Calu3 (cell line): ENCODE measurements at regions of chr11 and their contacts with region 1.

Region 1: DNA sequence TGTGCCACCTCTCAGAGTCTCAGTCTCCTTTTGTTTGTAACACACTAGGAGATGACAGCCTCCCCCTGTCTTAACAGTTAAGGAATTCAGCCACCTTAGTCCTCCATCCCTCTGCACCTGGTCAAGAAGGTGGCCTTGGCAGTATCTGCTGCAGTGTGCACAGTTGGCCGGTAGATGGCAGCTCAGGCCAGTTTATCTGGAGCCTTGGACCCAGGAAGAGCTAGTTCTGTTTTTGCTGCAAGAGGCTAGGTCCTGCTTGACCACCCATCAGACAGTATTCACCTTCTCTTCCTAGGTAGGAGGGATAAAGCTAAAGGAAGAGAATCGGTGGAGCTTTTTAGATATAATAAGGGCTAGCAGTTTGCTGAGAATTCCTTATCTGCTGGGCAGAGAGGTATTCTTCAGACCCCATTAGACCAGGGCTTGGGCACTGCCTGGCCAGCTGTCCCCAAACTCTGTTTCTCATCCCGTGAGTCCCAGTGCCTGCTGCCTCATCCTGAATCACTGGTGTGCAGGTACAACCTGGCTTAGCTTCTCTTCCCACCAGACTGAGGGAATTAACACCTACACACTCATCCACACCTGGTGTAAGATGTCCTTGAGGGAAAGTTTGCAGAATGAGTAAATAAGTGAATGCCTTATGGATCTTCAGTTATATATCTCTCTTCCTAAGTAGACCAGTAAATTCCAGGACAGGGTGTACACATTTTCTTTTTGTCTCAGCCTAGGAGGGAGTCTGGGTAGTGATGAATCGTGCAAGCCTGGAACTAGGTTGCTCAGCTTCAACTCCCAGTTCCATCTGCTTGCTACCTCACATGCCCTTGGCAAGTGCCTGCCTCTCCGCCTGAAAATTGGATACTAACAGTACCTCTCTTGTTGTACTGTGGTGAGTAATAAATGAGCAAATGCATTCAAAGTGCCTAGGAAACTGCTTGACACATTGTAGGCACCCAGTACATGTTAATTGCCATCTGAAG is 70.8 kb upstream of the NARS2 start:
- DNase-seq: peak; percentile 78
- H3K4me3 Mint-ChIP-seq: no peak overlapping the region
- H3K27ac Mint-ChIP-seq: no peak overlapping the region
- H3K4me1 Mint-ChIP-seq: no peaks in the 10 kb centered on the region
- H3K27me3 Mint-ChIP-seq: peaks cover 82% of the 10 kb centered on the region
- CTCF ChIP-seq: peak; percentile 88

Region 2: GRCh38 chr11:78514922-78515502 is 130.5 kb before region 1 on chr11:
- CTCF ChIA-PET with region 1: no interaction called
- intact Hi-C with region 1: no loop called
- DNase-seq: no peak
- H3K4me3 Mint-ChIP-seq: no peak overlapping the region
- H3K27ac Mint-ChIP-seq: no peak overlapping the region
- H3K4me1 Mint-ChIP-seq: no peaks in the 10 kb centered on the region
- H3K27me3 Mint-ChIP-seq: no peaks in the 10 kb centered on the region
- CTCF ChIP-seq: no peak

Region 3: GRCh38 chr11:78715639-78716311 is 70.3 kb after region 1 on chr11:
- CTCF ChIA-PET with region 1: interaction called, 76 read pairs
- intact Hi-C with region 1: loop called (anchors 1 kb)
- DNase-seq: peak; percentile 79
- H3K4me3 Mint-ChIP-seq: no peak overlapping the region
- H3K27ac Mint-ChIP-seq: no peak overlapping the region
- H3K4me1 Mint-ChIP-seq: peaks cover 10% of the 10 kb centered on the region
- H3K27me3 Mint-ChIP-seq: peaks cover 89% of the 10 kb centered on the region
- CTCF ChIP-seq: peak; percentile 66

Region 4: DNA sequence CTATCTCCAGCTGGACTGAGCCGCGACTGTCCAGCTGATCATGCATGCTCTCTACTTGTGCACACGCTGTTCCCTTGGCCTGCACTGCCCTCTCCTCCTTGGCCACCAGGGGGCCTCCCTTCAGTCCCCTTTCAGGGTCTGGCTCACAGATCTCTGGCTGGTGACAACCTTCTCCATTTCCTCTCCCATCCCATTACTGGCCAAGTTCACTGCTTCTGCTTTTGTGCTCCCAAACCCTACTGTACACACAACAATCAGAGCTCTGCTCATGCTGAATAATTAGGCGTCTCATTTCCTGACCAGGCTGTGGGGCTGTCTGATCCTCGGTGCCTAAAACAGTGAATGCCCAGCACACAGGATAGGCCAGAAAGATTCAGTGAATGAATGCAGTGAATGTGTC is 153.1 kb after region 1 on chr11:
- CTCF ChIA-PET with region 1: interaction called, 14 read pairs
- intact Hi-C with region 1: loop called (anchors 2 kb)
- DNase-seq: peak; percentile 81
- H3K4me3 Mint-ChIP-seq: no peak overlapping the region
- H3K27ac Mint-ChIP-seq: no peak overlapping the region
- H3K4me1 Mint-ChIP-seq: peaks cover 13% of the 10 kb centered on the region
- H3K27me3 Mint-ChIP-seq: peaks cover 48% of the 10 kb centered on the region
- CTCF ChIP-seq: peak; percentile 83

Region 5: GRCh38 chr11:78961247-78961646 is 315.7 kb after region 1 on chr11:
- CTCF ChIA-PET with region 1: interaction called, 51 read pairs
- intact Hi-C with region 1: loop called (anchors 1 kb)
- DNase-seq: peak; percentile 62
- H3K4me3 Mint-ChIP-seq: no peak overlapping the region
- H3K27ac Mint-ChIP-seq: no peak overlapping the region
- H3K4me1 Mint-ChIP-seq: peaks cover 8% of the 10 kb centered on the region
- H3K27me3 Mint-ChIP-seq: peaks cover 17% of the 10 kb centered on the region
- CTCF ChIP-seq: peak; percentile 63

Region 6: DNA sequence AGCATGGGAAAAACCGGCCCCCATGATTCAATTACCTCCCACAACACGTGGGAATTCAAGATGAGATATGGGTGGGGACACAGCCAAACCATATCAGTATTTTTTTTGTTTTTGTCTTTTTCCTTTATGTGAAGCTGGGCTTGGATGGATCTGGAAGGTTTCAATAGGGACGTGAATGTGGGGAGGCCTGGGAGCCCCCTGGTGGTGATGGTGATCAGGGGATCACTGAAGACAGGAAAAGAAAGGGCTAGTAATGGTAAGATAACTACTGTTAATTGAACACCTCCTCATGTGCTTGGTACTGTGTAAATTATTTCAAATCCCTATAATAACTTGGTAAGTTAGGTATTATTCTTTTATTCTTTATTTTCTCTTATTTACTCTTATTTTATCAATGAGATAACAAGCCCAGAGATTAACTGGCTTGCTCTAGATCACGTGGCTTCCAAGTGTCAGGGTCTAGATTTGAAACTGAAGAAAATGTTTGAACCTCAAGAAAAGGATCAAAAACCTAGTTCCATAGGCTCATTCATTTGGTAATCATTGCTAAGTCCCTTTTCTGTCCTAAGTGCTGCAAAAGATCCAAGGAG is 431.1 kb after region 1 on chr11:
- CTCF ChIA-PET with region 1: interaction called, 11 read pairs
- intact Hi-C with region 1: loop called (anchors 1 kb)
- DNase-seq: peak; percentile 61
- H3K4me3 Mint-ChIP-seq: no peak overlapping the region
- H3K27ac Mint-ChIP-seq: no peak overlapping the region
- H3K4me1 Mint-ChIP-seq: no peaks in the 10 kb centered on the region
- H3K27me3 Mint-ChIP-seq: no peaks in the 10 kb centered on the region
- CTCF ChIP-seq: no peak

Region 7: DNA sequence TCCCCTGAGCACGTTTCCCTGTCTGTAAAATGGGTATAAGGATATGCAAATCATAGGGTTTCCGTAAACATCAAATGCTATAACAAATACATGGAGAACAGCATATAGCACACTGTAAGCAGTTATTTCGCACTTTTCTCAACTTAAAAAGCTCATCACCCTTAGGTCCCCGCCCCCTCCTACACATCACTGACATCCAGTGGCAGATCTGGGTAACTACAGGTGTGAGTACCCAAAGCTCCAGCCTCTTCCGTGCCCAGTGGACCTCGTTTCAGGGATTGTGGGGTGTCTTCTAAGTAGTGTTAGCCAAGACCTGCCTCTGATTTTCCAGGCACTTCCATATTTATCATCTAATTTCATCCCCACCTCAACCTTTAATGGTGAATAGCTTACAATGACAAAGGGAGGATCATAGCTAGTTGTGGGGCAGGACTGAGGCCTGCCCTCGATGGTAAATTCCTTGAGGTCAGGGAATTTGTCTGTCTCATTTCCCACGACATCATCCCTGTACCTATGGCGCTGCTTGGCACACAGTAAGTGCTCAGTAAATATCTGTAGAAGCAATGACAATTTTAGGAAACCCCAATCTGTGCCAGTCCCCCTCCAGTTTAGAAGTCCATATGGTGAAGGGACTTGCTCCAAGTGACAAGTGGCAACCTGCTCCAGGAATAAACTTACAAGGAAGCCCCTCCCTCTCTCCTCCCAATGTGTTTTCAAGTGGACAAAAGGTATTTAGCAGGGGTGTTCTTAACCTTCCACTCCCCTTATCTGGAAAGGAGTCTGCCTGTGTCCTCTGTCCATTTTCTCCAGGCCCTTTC is 454.8 kb after region 1 on chr11:
- CTCF ChIA-PET with region 1: interaction called, 37 read pairs
- intact Hi-C with region 1: no loop called
- DNase-seq: peak; percentile 53
- H3K4me3 Mint-ChIP-seq: no peak overlapping the region
- H3K27ac Mint-ChIP-seq: no peak overlapping the region
- H3K4me1 Mint-ChIP-seq: no peaks in the 10 kb centered on the region
- H3K27me3 Mint-ChIP-seq: peaks cover 78% of the 10 kb centered on the region
- CTCF ChIP-seq: peak; percentile 56

Region 8: DNA sequence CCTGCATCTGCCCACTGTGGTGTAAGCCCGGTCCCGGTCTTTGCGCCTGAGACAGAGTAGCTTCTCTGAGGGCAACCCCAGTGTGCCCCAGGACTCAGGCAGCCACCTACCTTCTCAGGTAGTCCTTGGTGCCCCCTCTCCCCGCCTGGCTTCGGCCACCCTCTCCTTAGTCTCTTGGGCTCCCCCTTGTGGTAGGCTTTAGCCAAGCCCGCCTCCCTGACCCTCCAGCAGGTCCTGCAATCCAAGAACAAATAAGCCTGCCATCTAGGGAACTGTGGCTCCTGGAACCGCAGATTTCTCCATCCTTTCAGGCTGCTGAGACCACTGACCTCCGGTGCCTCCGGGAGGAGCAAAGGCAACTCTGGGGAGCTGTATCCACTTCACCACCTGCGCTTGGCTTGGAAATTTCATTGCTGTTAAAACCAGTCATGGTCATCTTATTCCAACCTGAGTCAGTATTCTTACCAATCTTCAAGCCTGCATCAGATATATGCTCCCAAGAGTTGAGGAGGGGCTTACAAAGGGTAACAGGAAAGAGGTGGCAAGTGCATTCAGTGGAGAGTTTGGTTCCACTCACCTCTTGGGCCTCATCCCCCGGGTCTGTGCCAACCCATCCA is 848.1 kb after region 1 on chr11:
- CTCF ChIA-PET with region 1: no interaction called
- intact Hi-C with region 1: loop called (anchors 10 kb)
- DNase-seq: peak; percentile 78
- H3K4me3 Mint-ChIP-seq: no peak overlapping the region
- H3K27ac Mint-ChIP-seq: no peak overlapping the region
- H3K4me1 Mint-ChIP-seq: no peaks in the 10 kb centered on the region
- H3K27me3 Mint-ChIP-seq: peaks cover 27% of the 10 kb centered on the region
- CTCF ChIP-seq: peak; percentile 85